Heart right ventricle (tissue), 16 donors: ENCODE measurements at regions of chr14 and their contacts with region 1.

Region 1: GRCh38 chr14:65077318-65077717 is 25.0 kb downstream of the MAX start:
- DNase-seq: no peak
- ATAC-seq: no peak
- H3K4me3 ChIP-seq: no peak overlapping the region
- H3K27ac ChIP-seq: no peak overlapping the region
- H3K4me1 ChIP-seq: peaks cover 16 to 83% (median 75%) of the 10 kb centered on the region in 9 donors
- H3K27me3 ChIP-seq: no peaks in the 10 kb centered on the region
- CTCF ChIP-seq: no peak

Region 2: GRCh38 chr14:64788668-64789067 is 288.6 kb before region 1 on chr14:
- intact Hi-C with region 1: no loop called
- DNase-seq: no peak
- ATAC-seq: peak in 1 of 8 donors; percentile 19
- H3K4me3 ChIP-seq: no peak overlapping the region
- H3K27ac ChIP-seq: no peak overlapping the region
- H3K4me1 ChIP-seq: peaks cover 0 to 10% (median 2%) of the 10 kb centered on the region in 9 donors
- H3K27me3 ChIP-seq: no peaks in the 10 kb centered on the region
- CTCF ChIP-seq: no peak

Region 3: DNA sequence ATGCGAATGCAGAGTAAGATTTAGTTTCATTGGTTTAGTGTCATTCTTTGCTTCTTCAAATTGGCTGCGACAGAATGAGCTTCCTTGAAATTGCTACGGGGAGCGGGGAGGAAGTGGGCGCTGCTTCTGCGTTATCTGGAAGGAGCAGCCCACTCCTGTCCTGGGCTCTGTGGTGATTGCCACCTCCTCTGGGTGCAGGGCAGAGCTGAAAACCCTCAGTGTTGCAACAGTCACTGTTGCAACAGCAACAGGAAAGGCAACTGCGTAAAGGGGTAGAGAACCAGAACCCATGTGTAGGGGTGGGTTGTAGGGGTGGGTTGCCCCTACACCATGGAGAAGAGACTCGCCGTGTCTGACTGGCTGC is 32.7 kb before region 1 on chr14:
- intact Hi-C with region 1: loop called in 1 of 10 experiments (anchors 1 kb)
- DNase-seq: no peak
- ATAC-seq: peak in 6 of 8 donors; percentile 14 to 51 (median 44)
- H3K4me3 ChIP-seq: peak overlapping the region in 1 of 10 donors; percentile 22
- H3K27ac ChIP-seq: peak overlapping the region in 3 of 10 donors; percentile 35 to 85 (median 37)
- H3K4me1 ChIP-seq: peaks cover 0 to 56% (median 16%) of the 10 kb centered on the region in 9 donors
- H3K27me3 ChIP-seq: no peaks in the 10 kb centered on the region
- CTCF ChIP-seq: no peak